Stomach (tissue), 19 donors: ENCODE measurements at regions of chrX and their contacts with region 1.

Region 1: DNA sequence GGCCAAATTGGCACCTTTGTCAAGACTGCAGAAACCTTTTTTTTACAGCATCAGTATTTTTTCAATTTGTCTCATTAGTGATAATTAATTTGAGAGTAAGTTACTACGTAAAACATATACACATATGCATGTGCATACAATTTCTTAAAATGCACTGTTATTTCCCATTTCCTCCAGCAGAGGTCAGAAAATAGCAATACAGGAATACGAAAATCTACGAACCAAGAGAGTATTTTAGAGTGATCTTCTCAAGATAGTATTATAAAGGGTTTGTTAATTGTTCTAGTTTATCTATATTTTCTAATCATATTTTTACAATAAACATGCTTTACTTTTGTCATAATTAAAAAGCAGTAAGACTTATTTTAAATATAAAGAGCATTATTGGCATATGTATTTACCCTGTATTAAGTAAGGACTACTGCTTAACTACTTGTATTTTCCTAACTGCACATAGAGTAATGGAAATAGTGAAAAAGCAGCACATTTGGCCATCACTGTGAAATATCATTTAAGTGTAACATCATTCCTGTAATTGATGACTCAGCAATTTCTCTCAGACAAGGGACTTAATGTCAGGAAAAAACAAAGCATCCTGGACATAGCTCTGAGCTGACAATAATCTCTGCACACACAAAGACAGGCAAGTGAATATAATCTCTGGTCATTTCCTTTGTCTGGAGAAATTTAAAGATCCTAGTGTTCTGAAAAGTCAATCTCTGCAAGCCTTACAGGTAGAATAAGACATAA is 45.6 kb downstream of the MAOB start:
- DNase-seq: peak in 1 of 2 donors; percentile 47
- H3K4me3 ChIP-seq: no peak overlapping the region
- H3K27ac ChIP-seq: no peak overlapping the region
- H3K4me1 ChIP-seq: no peaks in the 10 kb centered on the region
- H3K27me3 ChIP-seq: no peaks in the 10 kb centered on the region
- CTCF ChIP-seq: peak in 3 of 7 experiments; percentile 53 to 68 (median 63)
- EP300 ChIP-seq: no peak
- POLR2A ChIP-seq: no peak

Region 2: DNA sequence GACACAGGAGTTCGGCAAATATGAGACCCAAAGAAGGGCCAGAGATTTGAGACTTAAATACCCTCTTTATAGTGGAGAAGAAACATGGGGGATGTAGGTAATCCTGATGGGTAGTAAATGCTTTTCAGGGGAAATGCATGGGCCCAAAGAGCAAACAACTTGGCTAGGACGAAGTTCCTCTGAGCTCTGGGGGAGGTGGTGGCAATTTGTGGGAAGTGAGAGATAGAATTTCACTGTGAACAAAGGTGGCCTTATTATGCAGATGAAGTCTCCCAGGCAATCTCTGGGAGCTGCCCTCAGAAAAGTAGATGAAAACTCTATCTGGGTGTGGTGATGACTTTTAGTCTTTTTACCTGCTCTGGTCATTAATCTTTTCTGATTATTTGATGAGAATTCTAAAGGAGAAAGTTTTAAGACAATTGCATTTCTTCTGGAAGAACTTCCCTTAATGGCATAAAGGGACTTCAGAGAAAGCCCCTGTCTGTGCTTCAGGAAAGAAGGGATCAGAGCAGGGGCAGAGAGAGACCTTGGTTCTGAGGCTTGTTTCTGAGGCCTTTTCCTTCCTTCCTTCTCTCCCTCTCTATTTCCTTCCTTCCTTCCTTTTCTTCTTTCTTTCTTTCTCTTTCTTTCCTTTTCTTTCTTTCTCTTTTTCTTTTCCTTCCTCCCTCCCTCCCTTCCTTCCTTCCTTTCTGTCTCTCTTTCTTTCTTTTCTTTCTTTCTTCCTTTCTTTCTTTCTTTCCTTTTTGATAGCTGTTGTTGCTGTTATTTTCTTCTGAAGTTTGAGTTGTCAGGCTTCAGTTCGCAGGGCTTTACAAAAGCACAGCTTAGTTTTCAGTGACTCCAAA is 218.0 kb before region 1 on chrX:
- intact Hi-C with region 1: no loop called
- DNase-seq: no peak
- H3K4me3 ChIP-seq: no peak overlapping the region
- H3K27ac ChIP-seq: no peak overlapping the region
- H3K4me1 ChIP-seq: no peaks in the 10 kb centered on the region
- H3K27me3 ChIP-seq: peaks cover 0 to 5% (median 0%) of the 10 kb centered on the region in 3 donors
- CTCF ChIP-seq: no peak
- EP300 ChIP-seq: no peak
- POLR2A ChIP-seq: no peak

Region 3: GRCh38 chrX:43939187-43939926 is 102.7 kb after region 1 on chrX:
- intact Hi-C with region 1: loop called (anchors 10 kb)
- DNase-seq: peak in 1 of 2 donors; percentile 20
- H3K4me3 ChIP-seq: no peak overlapping the region
- H3K27ac ChIP-seq: no peak overlapping the region
- H3K4me1 ChIP-seq: no peaks in the 10 kb centered on the region
- H3K27me3 ChIP-seq: peaks cover 0 to 7% (median 0%) of the 10 kb centered on the region in 3 donors
- CTCF ChIP-seq: peak in 1 of 7 experiments; percentile 7
- EP300 ChIP-seq: no peak
- POLR2A ChIP-seq: no peak

Region 4: GRCh38 chrX:44002567-44002966 is 166.0 kb after region 1 on chrX:
- intact Hi-C with region 1: no loop called
- DNase-seq: no peak
- H3K4me3 ChIP-seq: no peak overlapping the region
- H3K27ac ChIP-seq: no peak overlapping the region
- H3K4me1 ChIP-seq: no peaks in the 10 kb centered on the region
- H3K27me3 ChIP-seq: peaks cover 0 to 9% (median 0%) of the 10 kb centered on the region in 3 donors
- CTCF ChIP-seq: no peak
- EP300 ChIP-seq: no peak
- POLR2A ChIP-seq: no peak